Activated CD4-positive, alpha-beta T cell treated with anti-CD3 and anti-CD28 coated beads, Interleukin-2, amount 10 ng/mL, durations not matched to agents 24 days and 14 days (primary cell): ENCODE measurements at regions of chr13 and their contacts with region 1.

Region 1: GRCh38 chr13:59391696-59392095 is 772.0 kb downstream of the DIAPH3 start:
- DNase-seq: peak; percentile 91
- H3K4me3 Mint-ChIP-seq: no peak overlapping the region
- H3K27ac Mint-ChIP-seq: no peak overlapping the region
- H3K4me1 Mint-ChIP-seq: peaks cover 2% of the 10 kb centered on the region
- H3K27me3 Mint-ChIP-seq: peaks cover 20% of the 10 kb centered on the region

Region 2: DNA sequence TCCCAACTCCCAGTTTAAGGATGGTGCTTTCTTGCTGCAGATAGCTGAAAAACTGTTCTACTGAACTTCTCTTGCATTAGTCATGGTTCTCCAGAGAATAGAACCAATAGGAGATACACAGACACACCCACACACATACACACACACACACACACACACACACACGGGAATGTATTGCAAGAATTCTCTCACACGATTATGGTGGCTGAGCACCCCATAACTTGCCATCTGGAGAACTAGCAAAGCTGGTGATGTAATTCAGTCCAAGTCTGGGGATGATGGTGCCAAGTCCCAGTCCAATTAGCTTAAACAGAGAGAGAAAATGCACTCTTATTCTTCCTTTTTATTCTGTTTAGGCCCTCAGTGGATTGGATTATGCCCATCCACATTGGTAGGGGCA is 128.1 kb after region 1 on chr13:
- intact Hi-C with region 1: no loop called
- DNase-seq: no peak
- H3K4me3 Mint-ChIP-seq: no peak overlapping the region
- H3K27ac Mint-ChIP-seq: no peak overlapping the region
- H3K4me1 Mint-ChIP-seq: no peaks in the 10 kb centered on the region
- H3K27me3 Mint-ChIP-seq: no peaks in the 10 kb centered on the region

Region 3: GRCh38 chr13:59677966-59678814 is 286.5 kb after region 1 on chr13:
- intact Hi-C with region 1: loop called (anchors 1 kb)
- DNase-seq: peak; percentile 65
- H3K4me3 Mint-ChIP-seq: no peak overlapping the region
- H3K27ac Mint-ChIP-seq: no peak overlapping the region
- H3K4me1 Mint-ChIP-seq: no peaks in the 10 kb centered on the region
- H3K27me3 Mint-ChIP-seq: no peaks in the 10 kb centered on the region

Region 4: GRCh38 chr13:59906413-59907049 is 514.8 kb after region 1 on chr13:
- intact Hi-C with region 1: loop called (anchors 2 kb)
- DNase-seq: no peak
- H3K4me3 Mint-ChIP-seq: no peak overlapping the region
- H3K27ac Mint-ChIP-seq: no peak overlapping the region
- H3K4me1 Mint-ChIP-seq: no peaks in the 10 kb centered on the region
- H3K27me3 Mint-ChIP-seq: no peaks in the 10 kb centered on the region

Region 5: GRCh38 chr13:60335531-60335930 is 943.8 kb after region 1 on chr13:
- intact Hi-C with region 1: loop called (anchors 1 kb)
- DNase-seq: no peak
- H3K4me3 Mint-ChIP-seq: no peak overlapping the region
- H3K27ac Mint-ChIP-seq: no peak overlapping the region
- H3K4me1 Mint-ChIP-seq: no peaks in the 10 kb centered on the region
- H3K27me3 Mint-ChIP-seq: peaks cover 16% of the 10 kb centered on the region